AG04449 (cell line): ENCODE measurements at regions of chr1 and their contacts with region 1.

Region 1: GRCh38 chr1:40951943-40952743 is 27.4 kb upstream of the CTPS1 start:
- DNase-seq: no peak
- H3K4me3 ChIP-seq: no peak overlapping the region
- CTCF ChIP-seq: peak; percentile 96

Region 2: DNA sequence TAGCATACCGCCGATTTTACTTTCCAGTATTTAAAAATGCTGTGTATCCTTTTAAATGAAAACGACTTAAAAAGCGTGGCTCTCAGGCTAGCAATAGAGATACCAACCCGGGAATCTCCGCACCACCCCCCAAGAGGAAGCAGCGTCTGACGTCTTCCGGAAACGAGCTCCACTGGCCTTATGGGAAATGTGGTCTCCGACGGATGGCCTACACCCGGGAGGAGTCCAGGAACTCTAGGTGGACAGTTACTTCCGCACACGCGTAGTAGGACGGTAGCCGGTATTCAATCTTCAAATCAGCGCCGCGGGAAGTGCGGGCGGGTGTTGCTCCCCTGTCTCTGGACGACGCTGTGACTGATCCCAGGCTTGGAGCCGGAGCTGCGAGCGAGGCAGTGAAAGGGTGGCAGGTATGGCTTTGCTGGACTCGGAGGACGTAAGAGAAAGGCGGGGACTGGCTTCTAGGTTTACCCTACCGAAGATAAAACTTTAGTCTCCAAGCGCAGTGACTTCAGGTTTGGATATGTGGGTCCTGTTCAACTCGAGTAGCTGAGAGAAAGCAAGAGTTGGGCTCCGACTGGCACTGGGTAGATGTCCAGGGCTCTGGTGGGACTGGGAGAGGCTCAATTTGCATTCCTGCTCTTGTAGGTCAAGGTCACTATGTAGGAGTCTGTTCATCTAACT is 420.6 kb before region 1 on chr1 and contains the start of gene ZNF684:
- CTCF ChIA-PET with region 1: interaction called, 10 read pairs
- POLR2A ChIA-PET with region 1: no interaction called
- DNase-seq: peak; percentile 74
- H3K4me3 ChIP-seq: peak within 1 kb of the TSS; percentile 90
- CTCF ChIP-seq: no peak

Region 3: GRCh38 chr1:40862008-40862863 is 89.9 kb before region 1 on chr1 and contains the start of gene CITED4:
- CTCF ChIA-PET with region 1: interaction called, 987 read pairs
- POLR2A ChIA-PET with region 1: interaction called, 4 read pairs
- DNase-seq: no peak
- H3K4me3 ChIP-seq: peak within 1 kb of the TSS; percentile 66
- CTCF ChIP-seq: peak; percentile 1

Region 4: GRCh38 chr1:40922981-40923380 is 29.2 kb before region 1 on chr1:
- CTCF ChIA-PET with region 1: interaction called, 26 read pairs
- POLR2A ChIA-PET with region 1: no interaction called
- DNase-seq: no peak
- H3K4me3 ChIP-seq: no peak overlapping the region
- CTCF ChIP-seq: no peak

Region 5: GRCh38 chr1:40939320-40940059 is 12.7 kb before region 1 on chr1:
- CTCF ChIA-PET with region 1: interaction called, 249 read pairs
- POLR2A ChIA-PET with region 1: no interaction called
- DNase-seq: no peak
- H3K4me3 ChIP-seq: no peak overlapping the region
- CTCF ChIP-seq: no peak

Region 6: GRCh38 chr1:40979233-40980067 is 27.3 kb after region 1 on chr1 and contains the start of gene CTPS1:
- CTCF ChIA-PET with region 1: interaction called, 282 read pairs
- POLR2A ChIA-PET with region 1: interaction called, 3 read pairs
- DNase-seq: peak; percentile 54
- H3K4me3 ChIP-seq: peak within 1 kb of the TSS; percentile 70
- CTCF ChIP-seq: peak; percentile 37

Region 7: DNA sequence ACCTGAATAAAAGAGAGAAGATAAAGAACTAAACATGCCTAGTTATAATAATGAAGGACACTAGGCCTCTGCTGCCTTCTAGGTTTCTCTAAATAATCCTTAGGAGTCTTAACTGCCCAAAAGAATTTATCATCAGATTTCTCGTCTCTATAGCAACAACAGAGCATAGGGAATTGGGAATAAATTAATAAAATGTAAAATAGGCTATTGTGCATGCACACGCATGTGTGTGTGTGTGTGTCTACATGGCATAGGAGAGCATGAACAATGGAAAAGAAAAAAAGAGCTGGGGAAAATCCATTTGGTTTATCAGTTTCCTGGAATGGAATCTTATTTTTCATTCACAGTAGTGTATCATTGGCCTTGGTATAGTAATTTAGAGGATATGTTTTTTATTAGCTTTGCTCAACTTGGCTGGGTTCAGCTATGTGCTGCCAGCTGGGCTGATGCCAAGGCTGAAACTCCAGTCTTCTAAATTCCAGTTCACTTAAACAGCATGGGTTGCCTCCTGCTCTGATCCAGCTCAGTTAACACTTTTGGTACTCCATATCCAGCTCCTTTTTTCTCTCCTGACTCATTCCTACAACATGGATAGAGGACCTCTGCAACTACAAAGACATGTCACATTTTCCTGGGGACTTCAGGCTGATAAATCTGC is 149.9 kb after region 1 on chr1:
- CTCF ChIA-PET with region 1: no interaction called
- POLR2A ChIA-PET with region 1: no interaction called
- DNase-seq: peak; percentile 95
- H3K4me3 ChIP-seq: no peak overlapping the region
- CTCF ChIP-seq: no peak

Region 8: GRCh38 chr1:41268154-41268770 is 316.1 kb after region 1 on chr1:
- CTCF ChIA-PET with region 1: no interaction called
- POLR2A ChIA-PET with region 1: no interaction called
- DNase-seq: no peak
- H3K4me3 ChIP-seq: no peak overlapping the region
- CTCF ChIP-seq: peak; percentile 93